ENCODE measurements at regions of chr9 and their contacts with region 1.

Region 1: GRCh38 chr9:119477197-119477596 is 108.0 kb upstream of the BRINP1 start:
- DNase-seq: no peak

Region 2: DNA sequence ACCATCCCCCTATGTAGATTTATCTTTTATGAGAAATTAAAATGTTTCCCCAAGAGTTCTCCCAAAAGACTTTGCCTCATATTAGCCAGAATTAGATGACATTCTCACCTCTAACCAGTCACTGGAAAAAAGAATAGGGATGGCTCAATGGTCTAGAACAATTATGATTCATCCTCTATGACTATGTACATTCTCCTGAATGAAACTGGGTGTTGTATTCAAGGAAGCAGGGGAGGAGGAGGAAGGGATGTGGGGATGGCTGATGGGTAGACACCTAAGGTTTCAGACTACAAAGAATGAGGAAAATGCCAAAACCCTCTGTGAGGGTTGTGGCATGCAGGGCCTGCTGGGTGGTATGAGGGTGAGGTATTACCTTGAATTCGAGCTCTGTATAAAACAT is 58.5 kb before region 1 on chr9:
- intact Hi-C with region 1: no loop called
- DNase-seq: no peak

Region 3: DNA sequence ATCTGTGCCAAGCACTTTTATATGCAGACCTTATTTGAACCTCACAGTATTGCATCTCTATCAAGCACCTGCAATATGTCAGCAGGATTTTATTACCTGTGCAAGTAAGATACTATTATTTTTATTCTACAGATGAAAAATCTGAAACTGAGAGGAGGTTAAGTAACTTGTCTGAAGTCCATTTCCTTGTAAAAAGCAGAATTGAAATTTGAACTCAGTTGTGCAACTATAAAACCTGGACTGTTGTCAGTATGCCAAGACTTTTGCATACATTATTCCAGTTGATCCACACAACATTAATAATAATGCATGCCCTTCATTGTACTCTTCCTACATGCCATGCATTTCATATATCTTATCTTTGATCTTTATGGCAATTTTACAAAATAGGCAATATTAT is 25.8 kb before region 1 on chr9:
- intact Hi-C with region 1: loop called in 1 of 2 experiments (anchors 1 kb)
- DNase-seq: no peak

Measured in posterior vena cava (tissue), 2 donors.